RWPE1 (cell line): ENCODE measurements at regions of chr6 and their contacts with region 1.

Region 1: DNA sequence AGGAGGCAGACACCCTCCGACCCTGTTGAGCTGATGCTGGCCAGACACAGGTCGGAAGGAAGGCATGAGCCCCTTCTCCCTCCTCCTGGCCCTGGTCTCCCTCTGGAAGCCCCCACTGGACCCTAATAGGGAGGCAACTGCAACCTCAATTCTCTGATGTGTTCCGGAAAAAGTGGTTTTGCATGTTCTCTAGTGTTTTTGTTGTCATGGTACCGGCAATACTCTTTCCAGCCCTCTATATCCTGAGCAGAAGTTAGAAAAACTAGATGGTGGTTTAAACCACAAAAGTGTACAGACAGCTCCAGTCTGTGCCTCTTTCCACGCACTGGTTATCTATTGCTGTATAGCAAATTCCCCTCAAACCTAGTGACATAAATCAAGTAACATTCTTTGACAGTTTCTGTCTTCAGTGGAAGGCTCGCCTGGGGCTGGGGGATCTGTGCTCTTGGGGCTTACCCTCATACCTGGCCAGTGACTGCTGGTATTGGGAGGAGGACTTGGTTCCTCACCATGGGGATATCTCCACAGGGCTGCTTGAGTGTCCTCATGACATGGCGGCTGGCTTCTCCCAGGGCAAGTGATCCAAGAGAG is 37.0 kb downstream of the SYTL3 start:
- DNase-seq: no peak
- H3K27ac ChIP-seq: no peak overlapping the region
- CTCF ChIP-seq: no peak

Region 2: GRCh38 chr6:158213925-158214674 is 472.8 kb before region 1 on chr6:
- CTCF ChIA-PET with region 1: interaction called, 15 read pairs
- POLR2A ChIA-PET with region 1: no interaction called
- DNase-seq: peak; percentile 49
- H3K27ac ChIP-seq: no peak overlapping the region
- CTCF ChIP-seq: peak; percentile 84

Region 3: GRCh38 chr6:158644231-158645063 is 42.4 kb before region 1 on chr6 and contains the start of gene DYNLT1:
- CTCF ChIA-PET with region 1: interaction called, 19 read pairs
- POLR2A ChIA-PET with region 1: interaction called, 4 read pairs
- DNase-seq: peak; percentile 95
- H3K27ac ChIP-seq: peak within 1 kb of the TSS; percentile 87
- CTCF ChIP-seq: no peak

Region 4: DNA sequence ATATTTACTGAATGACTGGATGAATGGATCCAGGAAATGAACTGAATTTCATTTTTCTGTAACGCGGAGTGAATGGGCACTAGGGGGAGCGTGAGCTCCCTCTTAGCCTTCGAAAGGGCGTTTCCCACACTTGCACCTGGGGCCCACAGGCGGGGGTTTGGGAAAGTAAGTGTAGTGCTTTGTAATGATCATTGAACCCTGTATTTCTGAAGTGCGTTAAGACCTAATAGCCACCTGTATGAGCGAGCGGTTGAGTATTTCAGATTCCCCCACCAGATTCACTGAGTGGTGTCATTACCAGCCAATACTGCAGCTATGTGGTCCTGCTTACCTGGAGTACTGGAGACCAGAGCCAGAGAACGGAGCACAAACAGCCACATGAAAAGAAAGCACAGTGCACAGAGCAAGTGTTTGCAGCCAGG is 26.5 kb before region 1 on chr6:
- CTCF ChIA-PET with region 1: interaction called, 22 read pairs
- POLR2A ChIA-PET with region 1: no interaction called
- DNase-seq: peak; percentile 55
- H3K27ac ChIP-seq: no peak overlapping the region
- CTCF ChIP-seq: peak; percentile 48

Region 5: DNA sequence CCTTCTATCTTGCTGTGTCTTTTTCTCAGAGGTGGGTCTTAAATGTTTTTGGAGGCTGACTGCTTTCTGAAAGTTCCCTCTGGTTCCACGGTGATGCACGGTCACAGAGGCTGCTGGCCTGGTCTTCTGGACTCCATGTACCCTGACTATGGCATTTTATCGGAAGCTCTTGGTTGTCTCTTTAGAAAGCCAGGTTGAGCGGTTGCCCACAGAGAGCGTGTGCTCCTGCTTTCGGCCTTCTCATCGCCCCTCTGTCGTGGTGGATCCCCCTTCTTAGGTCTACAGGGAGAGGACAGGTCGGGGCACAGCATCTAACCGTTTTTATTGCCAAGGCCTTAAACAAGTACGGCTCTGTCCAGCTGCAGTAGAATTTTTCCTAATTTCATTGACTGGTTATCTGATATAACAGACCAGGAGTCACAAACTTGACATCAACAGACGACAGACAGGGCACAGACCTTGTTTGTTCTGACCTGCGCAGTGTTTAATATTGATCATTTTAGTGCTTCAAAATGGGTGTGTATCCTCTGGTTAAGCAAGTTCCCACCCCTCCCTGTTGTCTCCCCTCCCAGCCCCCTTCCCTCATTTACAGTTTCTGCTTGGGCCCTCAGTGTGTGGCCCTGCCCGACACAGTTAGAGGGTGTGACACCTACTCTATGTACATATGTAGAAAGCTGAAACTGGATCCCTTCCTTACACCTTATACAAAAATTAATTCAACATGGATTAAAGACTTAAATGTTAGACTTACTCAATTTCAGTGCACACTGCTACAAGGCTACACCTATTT is 12.3 kb before region 1 on chr6:
- CTCF ChIA-PET with region 1: interaction called, 10 read pairs
- POLR2A ChIA-PET with region 1: no interaction called
- DNase-seq: no peak
- H3K27ac ChIP-seq: no peak overlapping the region
- CTCF ChIP-seq: no peak